K562 (cell line): ENCODE measurements at regions of chr7 and their contacts with region 1.

Region 1: GRCh38 chr7:102390697-102391484 is 5.3 kb upstream of the PRKRIP1 start:
- DNase-seq: peak; percentile 82 to 87 (median 83)
- ATAC-seq: peak; percentile 96
- H3K4me3 ChIP-seq: no peak overlapping the region
- H3K27ac ChIP-seq: no peak overlapping the region
- H3K4me1 ChIP-seq: peaks cover 0 to 4% of the 10 kb centered on the region in 2 experiments; a peak in 2 of 5 replicates
- H3K27me3 ChIP-seq: no peaks in the 10 kb centered on the region
- CTCF ChIP-seq: peak; percentile 94 to 97 (median 96)
- EP300 ChIP-seq: no peak
- POLR2A ChIP-seq: no peak
- RAD21 ChIP-seq: peak; percentile 76 to 87

Region 2: GRCh38 chr7:102279537-102280400 is 111.1 kb before region 1 on chr7:
- CTCF ChIA-PET with region 1: interaction called, 33 read pairs
- POLR2A ChIA-PET with region 1: interaction called, 4 read pairs
- in situ Hi-C with region 1: loop called (anchors 5 kb)
- intact Hi-C with region 1: loop called (anchors 1 kb)
- DNase-seq: peak; percentile 83 to 87 (median 86)
- ATAC-seq: peak; percentile 97
- H3K4me3 ChIP-seq: no peak overlapping the region
- H3K27ac ChIP-seq: no peak overlapping the region
- H3K4me1 ChIP-seq: peaks cover 2 to 39% of the 10 kb centered on the region in 2 experiments; a peak in 3 of 5 replicates
- H3K27me3 ChIP-seq: peaks cover 4 to 9% of the 10 kb centered on the region in 2 experiments; a peak in 4 of 5 replicates
- CTCF ChIP-seq: peak; percentile 91 to 96 (median 94)
- EP300 ChIP-seq: no peak
- POLR2A ChIP-seq: no peak
- RAD21 ChIP-seq: peak; percentile 89 to 93